ENCODE measurements at regions of chr14 and their contacts with region 1.

Region 1: GRCh38 chr14:94129111-94129757 is at the start of gene IFI27L2:
- DNase-seq: peak; percentile 88
- ATAC-seq: peak; percentile 98
- H3K4me3 Mint-ChIP-seq: peak within 1 kb of the TSS; percentile 82
- H3K27ac Mint-ChIP-seq: peak within 1 kb of the TSS; percentile 84
- H3K4me1 Mint-ChIP-seq: peaks cover 23% of the 10 kb centered on the region
- H3K27me3 Mint-ChIP-seq: peaks cover 19% of the 10 kb centered on the region
- total RNA-seq, gene IFI27L2: 95.5 to 112 TPM

Region 2: GRCh38 chr14:93914278-93914677 is 215.0 kb before region 1 on chr14:
- CTCF ChIA-PET with region 1: no interaction called
- DNase-seq: peak; percentile 78
- ATAC-seq: peak; percentile 90
- H3K4me3 Mint-ChIP-seq: no peak overlapping the region
- H3K27ac Mint-ChIP-seq: peak overlapping the region; percentile 54
- H3K4me1 Mint-ChIP-seq: peaks cover 15% of the 10 kb centered on the region
- H3K27me3 Mint-ChIP-seq: no peaks in the 10 kb centered on the region

Region 3: DNA sequence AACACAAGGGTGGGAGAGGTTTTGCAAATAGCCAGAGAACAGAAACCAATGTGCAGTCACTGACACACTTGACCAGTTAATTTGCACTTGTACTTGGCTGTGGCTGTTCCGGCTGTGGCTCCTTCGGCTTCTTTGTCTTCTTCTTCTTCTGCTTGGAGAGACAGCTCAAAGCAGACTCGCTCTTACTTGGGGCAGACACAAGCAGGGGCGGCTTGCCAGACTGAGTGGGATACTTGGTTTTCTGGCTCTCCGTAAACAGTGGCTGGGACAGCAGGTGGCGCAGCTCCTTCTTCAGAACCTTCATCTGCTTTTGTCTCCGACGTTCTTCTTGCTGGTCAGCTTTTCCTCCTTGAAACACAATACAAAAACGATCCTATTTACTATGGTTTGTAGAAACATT is 78.1 kb before region 1 on chr14:
- CTCF ChIA-PET with region 1: interaction called, 14 read pairs
- DNase-seq: peak; percentile 40
- ATAC-seq: no peak
- H3K4me3 Mint-ChIP-seq: no peak overlapping the region
- H3K27ac Mint-ChIP-seq: no peak overlapping the region
- H3K4me1 Mint-ChIP-seq: peaks cover 35% of the 10 kb centered on the region
- H3K27me3 Mint-ChIP-seq: no peaks in the 10 kb centered on the region

Region 4: GRCh38 chr14:94080471-94081289 is 48.6 kb before region 1 on chr14 and contains the start of gene DDX24:
- CTCF ChIA-PET with region 1: interaction called, 18 read pairs
- DNase-seq: peak; percentile 98
- ATAC-seq: peak; percentile 97
- H3K4me3 Mint-ChIP-seq: peak within 1 kb of the TSS; percentile 95
- H3K27ac Mint-ChIP-seq: peak within 1 kb of the TSS; percentile 98
- H3K4me1 Mint-ChIP-seq: peaks cover 58% of the 10 kb centered on the region
- H3K27me3 Mint-ChIP-seq: no peaks in the 10 kb centered on the region
- total RNA-seq, gene DDX24: 211 to 244 TPM

Region 5: GRCh38 chr14:94143239-94143638 is 14.0 kb after region 1 on chr14:
- CTCF ChIA-PET with region 1: interaction called, 58 read pairs
- DNase-seq: no peak
- ATAC-seq: no peak
- H3K4me3 Mint-ChIP-seq: no peak overlapping the region
- H3K27ac Mint-ChIP-seq: no peak overlapping the region
- H3K4me1 Mint-ChIP-seq: peaks cover 25% of the 10 kb centered on the region
- H3K27me3 Mint-ChIP-seq: peaks cover 4% of the 10 kb centered on the region

Region 6: GRCh38 chr14:94173885-94174603 is 44.8 kb after region 1 on chr14 and contains the start of gene PPP4R4:
- CTCF ChIA-PET with region 1: interaction called, 28 read pairs
- DNase-seq: peak; percentile 91
- ATAC-seq: peak; percentile 93
- H3K4me3 Mint-ChIP-seq: peak within 1 kb of the TSS; percentile 66
- H3K27ac Mint-ChIP-seq: peak within 1 kb of the TSS; percentile 56
- H3K4me1 Mint-ChIP-seq: peaks cover 17% of the 10 kb centered on the region
- H3K27me3 Mint-ChIP-seq: peaks cover 58% of the 10 kb centered on the region
- total RNA-seq, gene PPP4R4: 0.64 to 0.68 TPM

Region 7: GRCh38 chr14:94180655-94181271 is 51.5 kb after region 1 on chr14:
- CTCF ChIA-PET with region 1: interaction called, 28 read pairs
- DNase-seq: no peak
- ATAC-seq: peak; percentile 91
- H3K4me3 Mint-ChIP-seq: peak overlapping the region; percentile 61
- H3K27ac Mint-ChIP-seq: peak overlapping the region; percentile 70
- H3K4me1 Mint-ChIP-seq: peaks cover 11% of the 10 kb centered on the region
- H3K27me3 Mint-ChIP-seq: peaks cover 31% of the 10 kb centered on the region